ENCODE measurements at regions of chr7 and their contacts with region 1.

Region 1: DNA sequence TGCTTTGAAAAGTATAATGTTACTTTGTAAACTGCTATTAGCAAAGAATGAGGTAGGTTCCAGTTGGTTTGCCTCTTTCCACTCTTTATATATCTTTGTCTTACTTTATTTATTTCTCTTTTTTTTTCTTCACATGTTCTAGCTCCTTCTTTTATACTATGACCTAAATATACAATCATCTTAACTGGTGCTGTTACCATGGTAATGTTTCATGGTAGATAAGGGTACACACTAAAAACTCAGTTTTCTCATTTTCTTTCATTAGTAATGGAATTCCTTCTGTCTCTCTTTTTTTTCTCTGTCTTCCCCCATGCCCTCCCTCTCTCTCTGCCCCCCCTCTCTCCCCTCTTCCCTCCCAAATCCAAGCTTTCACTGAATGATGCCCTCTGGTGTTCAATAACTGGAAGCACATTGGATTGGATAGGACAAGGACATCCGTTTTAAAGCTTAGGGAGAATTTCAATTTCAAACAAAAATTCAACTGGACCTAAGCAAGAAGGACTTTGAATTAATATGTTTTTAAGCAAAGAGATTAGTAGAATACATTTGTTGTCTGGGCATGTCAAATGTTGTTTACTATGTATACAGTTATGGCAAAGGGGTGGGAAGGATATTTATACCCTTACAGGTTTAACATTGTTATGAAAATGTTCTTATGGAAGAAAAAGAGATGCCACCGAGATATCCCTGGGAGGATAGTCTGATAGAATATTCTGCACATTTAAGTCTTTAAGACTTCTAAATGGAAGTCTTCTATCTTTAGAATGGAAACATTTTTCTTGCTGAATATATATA is 6.0 kb downstream of the CHRM2 start:
- DNase-seq: peak; percentile 72
- H3K4me3 ChIP-seq: no peak overlapping the region
- H3K27ac ChIP-seq: no peak overlapping the region
- H3K4me1 ChIP-seq: peaks cover 0 to 32% of the 10 kb centered on the region in 2 experiments; a peak in 2 of 4 replicates
- H3K27me3 ChIP-seq: peaks cover 29% of the 10 kb centered on the region
- CTCF ChIP-seq: peak; percentile 76
- EP300 ChIP-seq: no peak
- RAD21 ChIP-seq: peak; percentile 62

Region 2: GRCh38 chr7:136857573-136857972 is 16.9 kb before region 1 on chr7:
- CTCF ChIA-PET with region 1: interaction called, 19 read pairs
- POLR2A ChIA-PET with region 1: no interaction called
- DNase-seq: no peak
- H3K4me3 ChIP-seq: no peak overlapping the region
- H3K27ac ChIP-seq: no peak overlapping the region
- H3K4me1 ChIP-seq: no peaks in the 10 kb centered on the region
- H3K27me3 ChIP-seq: no peaks in the 10 kb centered on the region
- CTCF ChIP-seq: no peak
- EP300 ChIP-seq: no peak
- RAD21 ChIP-seq: no peak

Region 3: DNA sequence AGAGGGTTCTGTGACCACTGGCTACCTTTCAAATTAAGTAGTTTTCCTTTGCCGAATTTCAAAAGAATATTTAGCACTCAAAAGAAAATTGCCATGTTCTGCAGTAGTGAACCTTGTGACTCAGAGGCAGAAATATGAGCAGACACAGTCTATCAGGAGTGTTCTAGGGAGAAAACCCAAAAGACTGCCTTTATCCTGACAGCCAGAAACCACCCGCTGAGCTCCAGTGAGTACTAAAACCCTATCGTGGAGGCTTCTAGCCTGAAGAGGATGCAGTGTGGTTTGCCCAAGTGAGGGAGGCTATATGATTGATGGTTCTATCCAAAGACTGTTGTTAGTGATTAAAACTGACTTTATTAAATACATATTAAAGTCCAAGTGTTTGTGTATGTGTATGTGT is 16.0 kb after region 1 on chr7:
- CTCF ChIA-PET with region 1: interaction called, 19 read pairs
- POLR2A ChIA-PET with region 1: no interaction called
- DNase-seq: no peak
- H3K4me3 ChIP-seq: no peak overlapping the region
- H3K27ac ChIP-seq: no peak overlapping the region
- H3K4me1 ChIP-seq: no peaks in the 10 kb centered on the region
- H3K27me3 ChIP-seq: no peaks in the 10 kb centered on the region
- CTCF ChIP-seq: no peak
- EP300 ChIP-seq: no peak
- RAD21 ChIP-seq: no peak

Region 4: DNA sequence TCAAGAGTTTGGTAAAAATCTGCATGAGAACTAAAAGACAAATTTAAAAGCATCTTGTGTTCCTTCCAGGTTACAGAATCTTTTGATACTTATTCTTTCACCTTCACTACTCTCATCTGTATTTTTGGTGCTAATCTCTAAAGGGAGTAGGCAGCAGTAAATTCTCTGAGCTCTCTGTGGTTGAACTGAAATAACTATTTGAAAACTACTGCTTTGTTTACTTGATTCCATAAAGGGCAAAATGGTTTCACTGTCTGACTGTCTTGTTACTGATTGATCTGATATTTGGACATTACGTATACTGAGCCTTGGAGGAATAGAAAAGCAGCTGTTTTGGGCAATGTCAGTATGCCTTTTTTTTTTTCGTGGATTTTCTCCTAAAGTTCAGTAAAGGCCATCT is 97.3 kb after region 1 on chr7:
- CTCF ChIA-PET with region 1: no interaction called
- POLR2A ChIA-PET with region 1: no interaction called
- DNase-seq: no peak
- H3K4me3 ChIP-seq: no peak overlapping the region
- H3K27ac ChIP-seq: no peak overlapping the region
- H3K4me1 ChIP-seq: no peaks in the 10 kb centered on the region
- H3K27me3 ChIP-seq: no peaks in the 10 kb centered on the region
- CTCF ChIP-seq: no peak
- EP300 ChIP-seq: no peak
- RAD21 ChIP-seq: no peak